WTC11 (cell line): ENCODE measurements at regions of chr6 and their contacts with region 1.

Region 1: DNA sequence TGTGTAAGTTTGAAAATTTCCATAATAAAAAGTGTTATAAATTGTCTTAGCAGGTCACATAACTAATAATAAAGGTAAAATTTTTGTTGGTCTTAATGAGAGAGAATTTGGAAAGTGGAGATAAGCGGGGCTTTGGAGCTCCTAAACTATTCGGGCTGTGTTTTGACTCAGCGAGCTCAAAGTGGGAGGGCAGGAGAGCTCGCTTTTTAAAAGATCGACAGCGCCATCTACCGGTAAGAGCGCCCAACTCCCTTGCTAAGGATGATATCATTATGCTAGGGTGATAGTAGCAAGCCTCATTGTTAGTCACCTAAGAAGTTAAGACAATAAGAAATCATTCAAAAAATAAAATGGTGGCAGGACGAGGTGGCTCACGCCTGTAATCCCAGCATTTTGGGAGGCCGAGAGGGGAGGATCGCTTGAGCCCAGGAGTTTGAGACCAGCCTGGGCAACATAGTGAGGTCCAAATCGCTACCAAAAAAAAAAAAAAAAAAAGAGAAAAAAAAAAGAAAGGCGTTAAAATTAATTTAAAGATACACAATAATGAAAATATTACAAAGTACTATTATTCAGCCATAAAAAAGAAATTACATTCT is 24.8 kb downstream of the C6orf15 start:
- DNase-seq: peak; percentile 91
- ATAC-seq: peak; percentile 86
- H3K4me3 Mint-ChIP-seq: no peak overlapping the region
- H3K27ac Mint-ChIP-seq: peak overlapping the region; percentile 68; the same call in 1 of the 2 replicates
- H3K4me1 Mint-ChIP-seq: peaks cover 13% of the 10 kb centered on the region
- H3K27me3 Mint-ChIP-seq: no peaks in the 10 kb centered on the region
- CTCF ChIP-seq: peak; percentile 82

Region 2: GRCh38 chr6:30678964-30679726 is 408.4 kb before region 1 on chr6:
- CTCF ChIA-PET with region 1: interaction called, 11 read pairs
- POLR2A ChIA-PET with region 1: interaction called, 5 read pairs
- DNase-seq: peak; percentile 94
- ATAC-seq: peak; percentile 83
- H3K4me3 Mint-ChIP-seq: peak overlapping the region; percentile 61
- H3K27ac Mint-ChIP-seq: no peak overlapping the region
- H3K4me1 Mint-ChIP-seq: peaks cover 38% of the 10 kb centered on the region
- H3K27me3 Mint-ChIP-seq: no peaks in the 10 kb centered on the region
- CTCF ChIP-seq: peak; percentile 93

Region 3: GRCh38 chr6:30883685-30884520 is 203.7 kb before region 1 on chr6 and contains the start of gene DDR1:
- CTCF ChIA-PET with region 1: interaction called, 26 read pairs
- POLR2A ChIA-PET with region 1: no interaction called
- DNase-seq: peak; percentile 58
- ATAC-seq: peak; percentile 4
- H3K4me3 Mint-ChIP-seq: peak within 1 kb of the TSS; percentile 93
- H3K27ac Mint-ChIP-seq: peak within 1 kb of the TSS; percentile 99
- H3K4me1 Mint-ChIP-seq: peaks cover 71% of the 10 kb centered on the region
- H3K27me3 Mint-ChIP-seq: no peaks in the 10 kb centered on the region
- CTCF ChIP-seq: no peak
- total RNA-seq, gene DDR1: 195 to 230 TPM (median 203 TPM) in 3 replicates

Region 4: GRCh38 chr6:30931969-30932645 is 155.5 kb before region 1 on chr6 and contains the start of gene SFTA2:
- CTCF ChIA-PET with region 1: interaction called, 11 read pairs
- POLR2A ChIA-PET with region 1: no interaction called
- DNase-seq: no peak
- ATAC-seq: no peak
- H3K4me3 Mint-ChIP-seq: no peak within 1 kb of the TSS
- H3K27ac Mint-ChIP-seq: no peak within 1 kb of the TSS
- H3K4me1 Mint-ChIP-seq: peaks cover 11% of the 10 kb centered on the region
- H3K27me3 Mint-ChIP-seq: no peaks in the 10 kb centered on the region
- CTCF ChIP-seq: no peak
- total RNA-seq, gene SFTA2: 0.66 to 0.80 TPM in 2 of 3 replicates, not detected in the other

Region 5: GRCh38 chr6:31007694-31008093 is 79.9 kb before region 1 on chr6:
- CTCF ChIA-PET with region 1: interaction called, 18 read pairs
- POLR2A ChIA-PET with region 1: no interaction called
- DNase-seq: no peak
- ATAC-seq: no peak
- H3K4me3 Mint-ChIP-seq: no peak overlapping the region
- H3K27ac Mint-ChIP-seq: no peak overlapping the region
- H3K4me1 Mint-ChIP-seq: no peaks in the 10 kb centered on the region
- H3K27me3 Mint-ChIP-seq: no peaks in the 10 kb centered on the region
- CTCF ChIP-seq: no peak

Region 6: GRCh38 chr6:31074401-31074800 is 13.2 kb before region 1 on chr6:
- CTCF ChIA-PET with region 1: interaction called, 40 read pairs
- POLR2A ChIA-PET with region 1: interaction called, 10 read pairs
- DNase-seq: no peak
- ATAC-seq: no peak
- H3K4me3 Mint-ChIP-seq: no peak overlapping the region
- H3K27ac Mint-ChIP-seq: no peak overlapping the region
- H3K4me1 Mint-ChIP-seq: peaks cover 30% of the 10 kb centered on the region
- H3K27me3 Mint-ChIP-seq: no peaks in the 10 kb centered on the region
- CTCF ChIP-seq: no peak

Region 7: DNA sequence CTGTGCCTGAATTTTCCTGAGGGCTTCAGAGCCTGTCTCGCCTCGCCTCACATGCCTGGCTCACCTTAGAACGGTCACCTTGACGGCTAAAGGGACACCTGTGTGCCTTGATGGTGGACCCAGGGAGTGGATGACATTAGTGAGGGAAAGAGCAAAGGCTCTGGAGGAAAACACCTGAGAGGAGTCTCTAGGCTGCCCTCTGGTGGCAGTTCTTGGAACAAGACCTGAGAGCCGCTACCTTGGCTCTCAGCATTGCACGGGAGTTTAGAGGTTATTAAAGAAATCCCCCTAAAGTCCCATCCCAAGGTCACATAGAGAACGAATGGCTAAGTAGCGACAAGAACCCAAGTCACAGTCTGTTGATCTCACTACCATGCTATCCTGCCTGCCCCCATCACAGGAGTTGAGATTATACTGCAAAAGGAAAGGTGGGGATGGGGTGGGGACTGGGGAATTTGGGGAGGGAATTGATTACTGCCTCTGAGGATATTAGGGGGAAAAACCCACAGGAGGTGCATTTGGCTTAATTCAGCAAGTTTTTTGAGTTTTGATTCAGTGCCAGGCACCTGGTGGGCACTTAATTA is 40.6 kb after region 1 on chr6:
- CTCF ChIA-PET with region 1: interaction called, 24 read pairs
- POLR2A ChIA-PET with region 1: no interaction called
- DNase-seq: peak; percentile 88
- ATAC-seq: peak; percentile 75
- H3K4me3 Mint-ChIP-seq: no peak overlapping the region
- H3K27ac Mint-ChIP-seq: peak overlapping the region; percentile 2; the same call in 1 of the 2 replicates
- H3K4me1 Mint-ChIP-seq: peaks cover 42% of the 10 kb centered on the region
- H3K27me3 Mint-ChIP-seq: peaks cover 10% of the 10 kb centered on the region
- CTCF ChIP-seq: peak; percentile 90

Region 8: DNA sequence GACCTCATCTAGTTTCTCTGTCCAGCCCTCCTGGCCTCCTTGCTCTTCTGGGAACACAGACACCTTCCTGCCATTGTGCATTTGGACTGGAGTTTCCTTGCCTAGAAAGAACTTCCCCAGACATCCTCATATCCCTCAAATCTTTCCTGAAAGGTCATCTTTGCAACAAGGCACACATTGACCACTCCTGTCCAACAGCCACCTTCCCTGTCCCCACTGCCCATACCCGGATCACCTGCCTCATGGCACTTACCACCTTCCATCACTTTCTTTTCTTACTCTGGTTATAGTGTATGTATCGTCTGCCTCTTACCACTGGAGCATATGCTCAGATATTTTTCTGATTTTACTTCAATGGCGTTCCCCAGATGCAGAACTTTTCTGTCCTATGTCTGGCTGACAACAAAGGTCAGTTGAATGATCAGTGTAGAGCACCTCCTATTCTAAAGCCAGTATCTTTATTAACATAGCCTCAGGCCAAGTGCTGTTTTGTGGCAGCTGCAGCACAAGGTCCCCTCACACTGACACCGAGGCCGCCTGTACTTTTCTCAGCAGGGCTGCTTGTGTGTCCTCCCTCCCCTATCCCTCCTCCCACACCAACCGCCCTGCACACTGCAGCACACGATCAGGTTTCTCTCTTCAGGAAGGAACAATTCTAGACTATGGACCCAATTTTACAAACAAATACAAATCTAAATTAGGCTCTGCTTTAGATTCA is 180.2 kb after region 1 on chr6:
- CTCF ChIA-PET with region 1: no interaction called
- POLR2A ChIA-PET with region 1: no interaction called
- DNase-seq: no peak
- ATAC-seq: no peak
- H3K4me3 Mint-ChIP-seq: no peak overlapping the region
- H3K27ac Mint-ChIP-seq: no peak overlapping the region
- H3K4me1 Mint-ChIP-seq: peaks cover 12% of the 10 kb centered on the region
- H3K27me3 Mint-ChIP-seq: peaks cover 23% of the 10 kb centered on the region
- CTCF ChIP-seq: no peak